GM12878 (cell line): ENCODE measurements at regions of chr1 and their contacts with region 1.

Region 1: GRCh38 chr1:112882271-112882744 is 73.7 kb downstream of the SLC16A1 start:
- DNase-seq: no peak
- ATAC-seq: no peak
- H3K4me3 ChIP-seq: no peak overlapping the region
- H3K27ac ChIP-seq: no peak overlapping the region
- H3K4me1 ChIP-seq: no peaks in the 10 kb centered on the region
- H3K27me3 ChIP-seq: no peaks in the 10 kb centered on the region; a peak in 1 of 4 replicates
- CTCF ChIP-seq: no peak
- EP300 ChIP-seq: no peak
- POLR2A ChIP-seq: no peak
- RAD21 ChIP-seq: no peak

Region 2: DNA sequence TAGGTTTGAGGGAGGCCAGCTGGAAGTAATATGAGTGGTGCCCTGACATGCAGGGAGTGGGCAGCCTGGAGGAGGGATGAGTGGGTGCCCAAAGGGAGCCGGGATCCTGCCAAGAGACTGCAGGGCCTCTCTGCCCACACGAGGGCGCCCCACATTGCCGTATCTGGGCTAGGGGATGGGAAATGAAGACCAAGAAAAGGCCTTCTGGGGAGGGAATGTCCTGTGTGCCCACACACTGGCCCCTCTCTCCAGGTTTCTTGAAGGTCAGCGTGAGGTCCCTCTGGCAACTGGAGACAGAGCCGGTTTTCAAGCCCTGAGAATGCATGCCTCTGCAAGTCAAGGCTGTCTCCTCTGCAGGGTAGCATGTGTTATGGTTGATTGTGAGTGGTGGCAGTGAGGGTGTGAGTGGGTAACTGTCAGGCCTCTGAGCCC is 73.0 kb before region 1 on chr1:
- CTCF ChIA-PET with region 1: interaction called, 6 read pairs
- POLR2A ChIA-PET with region 1: no interaction called
- RAD21 ChIA-PET with region 1: interaction called, 4 read pairs
- SMC1A ChIA-PET with region 1: interaction called, 3 read pairs
- in situ Hi-C with region 1: no loop called
- intact Hi-C with region 1: loop called (anchors 1 kb)
- DNase-seq: no peak
- ATAC-seq: peak; percentile 96
- H3K4me3 ChIP-seq: no peak overlapping the region
- H3K27ac ChIP-seq: no peak overlapping the region
- H3K4me1 ChIP-seq: no peaks in the 10 kb centered on the region
- H3K27me3 ChIP-seq: peaks cover 0 to 4% of the 10 kb centered on the region in 2 experiments; a peak in 1 of 4 replicates
- CTCF ChIP-seq: peak; percentile 86 to 96 (median 88)
- EP300 ChIP-seq: no peak
- POLR2A ChIP-seq: no peak
- RAD21 ChIP-seq: peak; percentile 76

Region 3: DNA sequence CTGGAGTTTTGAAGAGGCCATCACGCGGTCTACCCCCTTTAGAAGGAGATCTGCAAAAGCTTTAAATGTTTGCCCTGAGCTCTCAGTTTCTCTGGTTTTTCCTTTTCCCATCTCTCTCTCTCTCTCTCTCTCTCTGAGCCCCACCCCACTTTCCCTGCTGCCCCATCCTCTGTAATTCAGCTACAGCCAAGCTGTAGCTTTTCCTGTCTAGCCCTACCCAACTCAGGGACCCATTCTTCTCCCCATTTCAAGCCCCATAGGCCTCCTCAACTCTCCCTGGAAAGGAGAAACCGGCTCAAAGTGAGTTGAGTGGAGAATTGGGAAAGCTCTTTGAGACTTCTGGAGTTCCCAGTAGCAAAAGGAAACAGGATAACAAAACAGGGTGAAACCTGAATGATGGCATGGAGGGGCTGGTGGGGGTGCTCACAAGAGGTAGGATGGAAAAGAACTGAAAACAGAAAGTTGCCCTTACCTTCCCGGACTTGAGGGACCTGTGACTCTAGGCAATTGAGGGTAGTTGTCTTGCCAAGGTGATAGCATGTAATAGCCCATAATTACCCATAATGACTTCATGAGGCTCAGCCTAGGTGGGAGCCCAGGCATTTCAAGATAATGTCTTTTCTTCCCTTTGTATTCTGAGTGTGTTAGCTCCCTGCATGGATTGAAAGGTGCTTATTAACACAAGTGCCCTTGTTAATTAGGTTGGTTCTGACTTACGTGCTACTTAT is 11.3 kb before region 1 on chr1:
- CTCF ChIA-PET with region 1: interaction called, 12 read pairs
- POLR2A ChIA-PET with region 1: no interaction called
- RAD21 ChIA-PET with region 1: interaction called, 3 read pairs
- SMC1A ChIA-PET with region 1: no interaction called
- in situ Hi-C with region 1: no loop called
- intact Hi-C with region 1: no loop called
- DNase-seq: no peak
- ATAC-seq: no peak
- H3K4me3 ChIP-seq: no peak overlapping the region
- H3K27ac ChIP-seq: no peak overlapping the region
- H3K4me1 ChIP-seq: no peaks in the 10 kb centered on the region
- H3K27me3 ChIP-seq: no peaks in the 10 kb centered on the region
- CTCF ChIP-seq: no peak
- EP300 ChIP-seq: no peak
- POLR2A ChIP-seq: no peak
- RAD21 ChIP-seq: no peak

Region 4: DNA sequence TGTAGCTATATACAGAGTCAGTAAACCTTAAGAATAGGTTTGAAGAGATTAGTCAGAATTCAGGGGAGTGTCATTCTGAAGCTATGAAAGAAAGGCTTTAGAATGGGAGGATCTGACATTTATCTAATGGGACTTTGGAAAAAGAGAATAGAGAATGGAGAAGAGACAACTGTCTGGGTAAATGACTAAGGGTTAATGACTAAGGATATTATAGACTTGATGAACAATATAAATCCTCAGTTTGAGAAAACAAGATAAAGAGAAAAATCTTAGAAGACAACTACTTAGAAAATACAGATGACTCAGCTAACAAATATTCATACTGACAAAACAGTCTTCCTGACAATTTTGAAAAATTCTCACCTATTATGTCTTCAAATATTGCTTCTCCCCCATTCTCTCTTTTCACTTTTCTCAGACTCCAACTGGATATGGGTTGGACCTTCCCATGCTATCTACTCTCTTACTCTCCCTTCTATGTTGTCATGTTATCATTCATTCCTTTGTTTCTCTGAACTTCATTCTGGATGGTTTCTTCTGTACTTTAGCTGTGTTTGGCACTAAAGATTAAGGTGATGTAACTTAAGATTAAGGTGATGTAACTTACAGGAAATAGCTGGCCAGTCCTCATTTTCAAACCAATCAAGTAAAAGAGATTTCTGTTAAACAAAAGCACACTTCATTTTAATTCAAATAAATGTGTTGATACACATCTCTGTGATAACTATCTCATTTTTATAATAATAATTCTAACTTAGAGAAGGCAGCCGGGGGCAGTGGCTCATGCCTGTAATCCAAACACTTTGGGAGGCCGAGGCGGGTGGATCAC is 53.4 kb after region 1 on chr1:
- CTCF ChIA-PET with region 1: interaction called, 10 read pairs
- POLR2A ChIA-PET with region 1: interaction called, 3 read pairs
- RAD21 ChIA-PET with region 1: interaction called, 9 read pairs
- SMC1A ChIA-PET with region 1: interaction called, 4 read pairs
- in situ Hi-C with region 1: no loop called
- intact Hi-C with region 1: no loop called
- DNase-seq: no peak
- ATAC-seq: no peak
- H3K4me3 ChIP-seq: no peak overlapping the region
- H3K27ac ChIP-seq: no peak overlapping the region
- H3K4me1 ChIP-seq: 0 out of 2 replicates have a peak, but pooled peaks cover 4% of the 10 kb centered on the region
- H3K27me3 ChIP-seq: no peaks in the 10 kb centered on the region
- CTCF ChIP-seq: no peak
- EP300 ChIP-seq: no peak
- POLR2A ChIP-seq: no peak
- RAD21 ChIP-seq: no peak

Region 5: DNA sequence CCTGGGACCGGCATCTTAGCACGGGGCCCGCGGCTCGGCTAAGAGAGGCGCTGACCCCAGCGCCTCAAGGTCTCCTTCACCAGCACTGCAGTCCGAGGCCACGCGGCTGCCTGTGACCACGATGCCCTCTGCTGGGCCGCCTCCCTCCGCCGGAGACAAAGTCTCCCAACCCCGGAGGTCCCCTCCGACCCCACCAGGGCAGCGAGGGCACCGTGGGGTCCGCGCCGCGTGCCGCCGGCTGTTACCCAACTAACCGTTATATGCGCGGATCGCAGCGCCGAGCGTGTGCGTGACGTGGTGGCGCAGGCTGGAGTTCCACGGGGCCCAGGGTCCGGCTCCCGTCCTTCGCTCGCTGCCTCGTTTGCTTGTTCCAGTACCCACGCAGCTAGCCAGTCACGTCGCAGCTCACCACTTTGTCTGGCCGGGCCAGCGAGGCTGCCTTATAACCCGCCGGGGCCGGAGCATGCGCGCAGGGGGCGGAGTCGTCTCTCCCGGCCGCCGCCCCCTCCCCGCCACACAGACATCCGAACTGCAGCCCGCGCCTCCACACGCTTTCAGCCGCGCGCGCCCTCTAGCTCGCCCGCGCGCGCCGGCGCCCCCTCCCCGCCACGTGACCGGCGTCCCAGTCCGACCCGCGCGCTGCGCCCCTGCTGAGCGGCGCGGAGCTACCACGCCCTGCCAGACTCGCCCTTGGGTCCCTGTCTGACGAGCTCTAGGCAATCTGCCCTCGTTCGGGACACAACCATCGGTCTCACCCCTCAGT is 73.7 kb after region 1 on chr1 and contains the start of gene SLC16A1:
- CTCF ChIA-PET with region 1: interaction called, 7 read pairs
- POLR2A ChIA-PET with region 1: no interaction called
- RAD21 ChIA-PET with region 1: no interaction called
- SMC1A ChIA-PET with region 1: interaction called, 5 read pairs
- in situ Hi-C with region 1: no loop called
- intact Hi-C with region 1: loop called (anchors 2 kb)
- DNase-seq: peak; percentile 66
- ATAC-seq: peak; percentile 81
- H3K4me3 ChIP-seq: peak within 1 kb of the TSS; percentile 82
- H3K27ac ChIP-seq: peak within 1 kb of the TSS; percentile 93
- H3K4me1 ChIP-seq: no peaks in the 10 kb centered on the region
- H3K27me3 ChIP-seq: no peaks in the 10 kb centered on the region
- CTCF ChIP-seq: peak; percentile 4 to 43 (median 22); a peak in 3 of 6 replicates
- EP300 ChIP-seq: no peak
- POLR2A ChIP-seq: peak; percentile 100
- RAD21 ChIP-seq: peak; percentile 24; the same call in 1 of the 2 replicates
- polyA plus RNA-seq, gene SLC16A1: 40.1 to 45.2 TPM

Region 6: GRCh38 chr1:113057006-113057405 is 174.7 kb after region 1 on chr1:
- CTCF ChIA-PET with region 1: interaction called, 8 read pairs
- POLR2A ChIA-PET with region 1: interaction called, 5 read pairs
- RAD21 ChIA-PET with region 1: interaction called, 3 read pairs
- SMC1A ChIA-PET with region 1: interaction called, 5 read pairs
- in situ Hi-C with region 1: no loop called
- intact Hi-C with region 1: loop called (anchors 5 kb)
- DNase-seq: no peak
- ATAC-seq: no peak; the same call in none of the 3 replicates
- H3K4me3 ChIP-seq: no peak overlapping the region
- H3K27ac ChIP-seq: no peak overlapping the region
- H3K4me1 ChIP-seq: no peaks in the 10 kb centered on the region
- H3K27me3 ChIP-seq: no peaks in the 10 kb centered on the region
- CTCF ChIP-seq: no peak
- EP300 ChIP-seq: no peak
- POLR2A ChIP-seq: no peak
- RAD21 ChIP-seq: no peak

Region 7: GRCh38 chr1:113677250-113678158 is 795.2 kb after region 1 on chr1:
- CTCF ChIA-PET with region 1: no interaction called
- POLR2A ChIA-PET with region 1: no interaction called
- RAD21 ChIA-PET with region 1: no interaction called
- SMC1A ChIA-PET with region 1: no interaction called
- in situ Hi-C with region 1: loop called (anchors 10 kb)
- intact Hi-C with region 1: no loop called
- DNase-seq: no peak
- ATAC-seq: peak; percentile 74; the same call in 2 of the 3 replicates
- H3K4me3 ChIP-seq: no peak overlapping the region
- H3K27ac ChIP-seq: no peak overlapping the region
- H3K4me1 ChIP-seq: no peaks in the 10 kb centered on the region
- H3K27me3 ChIP-seq: no peaks in the 10 kb centered on the region
- CTCF ChIP-seq: peak; percentile 36 to 52 (median 42); a peak in 5 of 6 replicates
- EP300 ChIP-seq: no peak
- POLR2A ChIP-seq: no peak
- RAD21 ChIP-seq: peak; percentile 81